Activated CD4-positive, alpha-beta T cell treated with anti-CD3 and anti-CD28 coated beads, Interleukin-2, amount 10 ng/mL, durations not matched to agents 24 days and 14 days (primary cell): ENCODE measurements at regions of chr19 and their contacts with region 1.

Region 1: DNA sequence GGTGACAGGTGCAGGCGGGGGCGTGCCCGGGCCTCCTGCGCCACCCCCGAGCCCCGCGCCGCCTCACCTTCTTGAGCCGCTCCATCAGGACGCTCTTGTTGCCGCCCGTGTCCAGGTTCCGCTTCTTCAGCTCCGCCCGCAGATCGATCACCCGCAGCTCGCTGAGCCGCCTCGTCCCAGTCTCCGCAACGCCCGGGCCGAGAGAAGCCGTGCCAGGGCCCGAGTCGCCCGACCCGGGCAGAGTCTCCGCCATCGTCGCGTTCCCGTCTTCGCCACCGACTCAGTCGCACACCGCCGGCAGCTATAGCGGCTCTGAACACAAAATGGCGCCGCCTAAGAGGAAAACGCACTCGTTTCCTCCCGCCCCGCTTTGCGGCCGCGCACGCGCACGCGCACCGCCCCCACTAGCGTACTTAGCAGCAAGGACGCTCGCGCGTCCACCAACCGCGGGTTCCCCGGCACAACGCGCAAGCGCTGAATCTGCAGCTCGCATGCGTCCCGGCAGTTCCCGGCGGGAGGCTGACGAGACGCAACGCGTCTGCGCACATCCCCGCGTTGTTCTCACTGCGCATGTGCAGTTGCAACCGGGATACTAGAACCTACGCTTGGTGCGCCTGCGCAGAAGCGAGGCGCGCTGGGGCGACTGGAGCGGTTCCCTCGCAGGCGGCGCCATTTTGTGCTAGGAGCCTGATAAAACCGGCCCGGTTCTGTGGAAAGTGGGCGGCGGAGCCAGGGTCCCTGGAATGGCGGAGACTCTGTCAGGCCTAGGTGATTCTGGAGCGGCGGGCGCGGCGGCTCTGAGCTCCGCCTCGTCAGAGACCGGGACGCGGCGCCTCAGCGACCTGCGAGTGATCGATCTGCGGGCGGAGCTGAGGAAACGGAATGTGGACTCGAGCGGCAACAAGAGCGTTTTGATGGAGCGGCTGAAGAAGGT is at the starts of genes SAFB and SAFB2:
- DNase-seq: peak; percentile 100
- H3K4me3 Mint-ChIP-seq: peak within 1 kb of the TSS; percentile 100
- H3K27ac Mint-ChIP-seq: peak within 1 kb of the TSS; percentile 100
- H3K4me1 Mint-ChIP-seq: peaks cover 55% of the 10 kb centered on the region
- H3K27me3 Mint-ChIP-seq: peaks cover 3% of the 10 kb centered on the region
- total RNA-seq, gene SAFB: 142 and 143 TPM in 2 replicates
- total RNA-seq, gene SAFB2: 97.6 and 101 TPM in 2 replicates

Region 2: GRCh38 chr19:4791170-4792018 is 831.3 kb before region 1 on chr19 and contains the start of gene FEM1A:
- intact Hi-C with region 1: loop called (anchors 2 kb)
- DNase-seq: peak; percentile 99
- H3K4me3 Mint-ChIP-seq: peak within 1 kb of the TSS; percentile 89
- H3K27ac Mint-ChIP-seq: peak within 1 kb of the TSS; percentile 91
- H3K4me1 Mint-ChIP-seq: peaks cover 14% of the 10 kb centered on the region
- H3K27me3 Mint-ChIP-seq: no peaks in the 10 kb centered on the region
- total RNA-seq, gene FEM1A: 22.9 and 23.3 TPM in 2 replicates

Region 3: GRCh38 chr19:5561559-5561958 is 61.2 kb before region 1 on chr19:
- intact Hi-C with region 1: no loop called
- DNase-seq: no peak
- H3K4me3 Mint-ChIP-seq: no peak overlapping the region
- H3K27ac Mint-ChIP-seq: no peak overlapping the region
- H3K4me1 Mint-ChIP-seq: no peaks in the 10 kb centered on the region
- H3K27me3 Mint-ChIP-seq: peaks cover 3% of the 10 kb centered on the region

Region 4: DNA sequence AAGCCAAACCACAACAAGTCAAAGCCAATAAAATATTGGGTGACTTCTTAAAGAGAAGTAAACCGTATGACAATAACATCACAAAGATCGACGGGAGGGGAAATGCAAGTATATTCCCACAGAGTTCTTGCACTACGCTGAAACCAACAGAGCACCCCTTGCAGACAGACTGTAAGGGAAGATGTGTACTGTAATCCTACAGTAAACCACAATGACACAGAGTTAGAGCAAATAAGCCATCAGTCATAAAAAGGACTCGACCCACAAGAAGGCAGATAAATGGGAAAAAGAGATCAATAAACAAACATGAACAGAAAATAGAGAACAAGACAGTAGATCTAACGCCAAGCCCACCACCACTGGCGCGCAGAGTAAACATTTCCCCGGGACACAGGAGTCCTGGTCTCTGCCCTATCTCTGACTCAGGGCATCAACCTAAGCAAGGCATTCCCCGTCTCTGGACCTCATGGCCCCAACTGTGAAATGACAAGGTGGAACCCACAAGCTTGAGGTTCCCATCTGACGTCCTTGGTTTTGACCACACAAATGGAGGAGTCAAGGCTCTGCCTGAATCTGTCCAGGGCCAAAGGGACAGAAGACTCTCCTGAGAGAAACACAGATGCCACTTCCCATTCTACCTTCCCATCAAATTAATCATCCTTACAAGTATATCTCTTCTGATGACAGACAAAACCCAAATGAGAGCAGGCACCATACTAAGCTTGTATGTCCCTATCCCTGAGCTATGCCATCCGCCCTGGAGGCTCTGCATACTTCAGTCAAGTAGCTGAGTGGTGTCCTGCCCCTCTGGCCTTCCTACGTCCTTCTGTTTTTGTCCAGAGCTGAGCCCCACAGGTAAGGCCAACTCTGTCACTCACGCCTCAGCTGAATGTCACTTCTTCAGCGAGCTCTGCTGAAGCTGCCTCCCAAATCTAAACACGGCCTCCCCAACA is 15.1 kb before region 1 on chr19:
- intact Hi-C with region 1: no loop called
- DNase-seq: no peak
- H3K4me3 Mint-ChIP-seq: no peak overlapping the region
- H3K27ac Mint-ChIP-seq: no peak overlapping the region
- H3K4me1 Mint-ChIP-seq: peaks cover 2% of the 10 kb centered on the region
- H3K27me3 Mint-ChIP-seq: no peaks in the 10 kb centered on the region

Region 5: DNA sequence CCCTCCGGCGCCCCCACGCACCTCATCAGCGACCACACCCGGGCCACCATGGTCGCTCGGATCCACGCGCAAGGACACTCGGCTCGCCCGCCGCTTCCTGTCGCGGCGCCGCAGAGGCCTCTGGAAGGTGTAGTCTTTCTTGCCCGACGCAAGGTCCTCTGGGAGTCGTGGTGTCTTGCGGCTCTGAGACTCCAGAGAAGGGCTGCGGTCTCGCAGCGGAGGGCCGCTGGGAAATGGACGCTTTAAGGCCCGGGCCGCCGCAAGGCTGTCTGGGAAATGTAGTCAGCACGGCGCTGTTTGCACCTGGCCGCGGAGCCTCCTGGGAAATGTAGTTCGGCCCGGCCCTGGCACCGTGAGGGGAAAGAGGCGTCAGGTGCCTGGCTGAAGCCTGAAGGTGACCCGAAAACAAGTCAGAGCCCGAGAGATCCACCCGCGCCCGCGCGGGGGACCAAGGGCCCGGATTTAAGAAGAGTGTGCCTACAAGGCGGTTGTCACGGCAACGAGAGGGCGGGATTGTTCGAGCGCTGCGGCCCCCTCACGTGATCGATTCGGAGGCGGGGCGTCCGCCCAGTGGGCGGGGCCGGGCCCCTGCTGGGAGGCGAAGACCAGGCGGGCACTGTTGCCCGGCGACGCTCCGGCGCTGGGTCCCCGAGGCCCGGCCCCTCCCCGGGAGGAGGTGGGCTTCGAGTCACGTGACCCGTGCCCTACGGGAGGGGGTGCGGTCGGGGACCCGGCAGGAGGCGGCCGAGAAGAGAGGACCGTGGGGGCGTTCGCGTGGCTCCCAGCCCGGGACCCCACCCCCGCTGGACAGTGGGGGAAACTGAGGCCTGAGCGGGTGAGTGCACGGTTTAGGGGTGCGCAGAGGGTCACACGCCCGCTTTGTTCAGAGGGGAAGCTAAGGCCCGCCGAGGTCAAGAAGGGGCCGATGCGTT is 58.0 kb after region 1 on chr19 and contains the starts of genes HSD11B1L and MICOS13:
- intact Hi-C with region 1: loop called (anchors 1 kb)
- DNase-seq: peak; percentile 99
- H3K4me3 Mint-ChIP-seq: peak within 1 kb of the TSS; percentile 99
- H3K27ac Mint-ChIP-seq: peak within 1 kb of the TSS; percentile 97
- H3K4me1 Mint-ChIP-seq: peaks cover 22% of the 10 kb centered on the region
- H3K27me3 Mint-ChIP-seq: peaks cover 7% of the 10 kb centered on the region
- total RNA-seq, gene HSD11B1L: 2.2 and 2.6 TPM in 2 replicates
- total RNA-seq, gene MICOS13: 56.2 and 63.4 TPM in 2 replicates